ENCODE measurements at regions of chr11 and their contacts with region 1.

Region 1: DNA sequence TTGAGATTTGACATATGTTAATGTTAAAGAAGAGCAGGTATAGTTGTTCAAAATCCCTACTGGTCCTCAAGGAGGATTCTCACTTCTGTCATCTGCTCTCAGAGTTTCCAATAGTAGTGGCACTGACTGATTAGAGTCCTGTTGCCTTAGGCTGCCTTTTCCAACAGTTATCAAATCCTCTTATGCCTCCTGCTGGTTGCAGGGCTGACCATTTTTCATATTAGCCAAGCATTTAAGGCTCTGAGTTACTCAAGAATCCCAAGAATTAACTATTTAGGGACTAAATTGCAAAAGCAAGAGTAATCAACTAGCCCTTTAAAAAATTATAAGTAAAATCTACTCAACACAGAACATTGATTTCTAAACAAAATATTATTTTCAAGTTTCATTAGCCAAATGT is 212.0 kb upstream of the CHORDC1 start:
- DNase-seq: peak; percentile 27
- H3K4me3 Mint-ChIP-seq: no peak overlapping the region
- H3K27ac Mint-ChIP-seq: no peak overlapping the region
- H3K4me1 Mint-ChIP-seq: no peaks in the 10 kb centered on the region
- H3K27me3 Mint-ChIP-seq: no peaks in the 10 kb centered on the region
- CTCF ChIP-seq: no peak

Region 2: DNA sequence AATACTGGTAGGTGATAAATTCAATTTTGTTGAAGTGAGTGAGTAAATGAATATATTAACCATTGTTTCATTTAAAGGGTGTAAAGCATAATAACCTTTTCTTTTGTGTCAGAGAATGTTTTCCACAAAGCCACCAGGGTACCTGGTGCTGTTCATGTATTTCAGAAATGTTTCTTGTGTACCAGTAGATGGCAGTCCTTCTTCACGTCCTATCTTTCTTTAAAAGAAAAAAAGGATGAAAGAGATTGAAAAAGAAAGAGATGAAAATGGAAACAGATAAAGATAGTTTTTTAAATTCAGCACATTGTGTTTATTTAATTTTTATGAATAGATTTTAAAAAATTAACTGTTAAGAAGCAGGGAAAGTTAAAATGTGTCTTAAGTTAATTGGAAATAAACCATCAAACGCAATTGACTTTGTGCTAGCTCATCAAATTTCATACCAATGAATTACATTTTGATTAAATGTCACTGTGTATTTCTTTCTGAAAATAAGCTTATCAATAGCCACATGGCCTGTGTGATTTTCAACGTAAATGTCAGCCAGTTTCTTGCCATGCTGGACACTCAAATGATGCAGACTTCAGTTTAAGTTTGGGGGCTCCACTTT is 146.5 kb before region 1 on chr11:
- CTCF ChIA-PET with region 1: no interaction called
- intact Hi-C with region 1: loop called (anchors 1 kb)
- DNase-seq: no peak
- H3K4me3 Mint-ChIP-seq: no peak overlapping the region
- H3K27ac Mint-ChIP-seq: no peak overlapping the region
- H3K4me1 Mint-ChIP-seq: no peaks in the 10 kb centered on the region
- H3K27me3 Mint-ChIP-seq: no peaks in the 10 kb centered on the region
- CTCF ChIP-seq: peak; percentile 34

Region 3: GRCh38 chr11:90310210-90310609 is 124.6 kb before region 1 on chr11:
- CTCF ChIA-PET with region 1: interaction called, 3 read pairs
- intact Hi-C with region 1: loop called (anchors 10 kb)
- DNase-seq: no peak
- H3K4me3 Mint-ChIP-seq: no peak overlapping the region
- H3K27ac Mint-ChIP-seq: no peak overlapping the region
- H3K4me1 Mint-ChIP-seq: no peaks in the 10 kb centered on the region
- H3K27me3 Mint-ChIP-seq: no peaks in the 10 kb centered on the region
- CTCF ChIP-seq: no peak

Region 4: DNA sequence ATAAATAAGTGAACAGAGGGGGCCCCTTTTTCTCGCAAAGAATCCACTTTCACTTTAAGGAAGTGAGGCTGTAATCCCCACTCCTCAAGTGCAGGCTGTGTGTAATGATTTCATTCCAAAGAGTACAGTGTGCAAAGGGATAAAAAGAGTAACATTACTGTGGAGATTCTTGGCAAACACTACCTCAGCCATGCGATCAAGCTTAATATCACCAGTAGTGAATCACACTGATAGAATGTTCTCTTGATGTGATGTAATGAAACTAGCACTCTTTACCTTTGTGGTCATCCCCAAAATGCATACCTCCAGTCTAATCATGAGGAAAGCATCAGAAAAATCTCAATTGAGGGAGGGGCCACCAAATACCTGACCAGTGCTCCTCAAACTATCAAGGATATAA is 34.1 kb after region 1 on chr11:
- CTCF ChIA-PET with region 1: no interaction called
- intact Hi-C with region 1: no loop called
- DNase-seq: peak; percentile 1
- H3K4me3 Mint-ChIP-seq: no peak overlapping the region
- H3K27ac Mint-ChIP-seq: no peak overlapping the region
- H3K4me1 Mint-ChIP-seq: peaks cover 13% of the 10 kb centered on the region
- H3K27me3 Mint-ChIP-seq: no peaks in the 10 kb centered on the region
- CTCF ChIP-seq: no peak

Region 5: DNA sequence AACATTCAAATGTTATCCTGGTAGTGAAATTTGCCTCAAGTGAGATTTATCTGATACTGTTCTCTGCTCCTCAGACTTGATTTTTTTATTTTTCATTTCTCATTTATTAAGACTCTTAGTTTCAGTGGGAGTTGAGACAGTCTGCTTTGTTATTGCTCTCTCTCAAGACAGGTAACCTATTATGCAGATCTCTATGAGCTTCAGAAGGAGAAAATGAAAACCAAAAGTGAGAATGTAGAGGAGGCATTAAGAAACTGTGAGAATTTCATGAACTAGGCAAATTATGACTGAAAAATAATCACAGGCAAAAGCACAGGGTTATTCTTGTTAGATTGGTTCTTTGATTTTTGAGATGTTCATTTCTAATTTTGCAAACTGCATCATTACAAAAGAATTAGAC is 78.0 kb after region 1 on chr11:
- CTCF ChIA-PET with region 1: no interaction called
- intact Hi-C with region 1: no loop called
- DNase-seq: no peak
- H3K4me3 Mint-ChIP-seq: no peak overlapping the region
- H3K27ac Mint-ChIP-seq: no peak overlapping the region
- H3K4me1 Mint-ChIP-seq: no peaks in the 10 kb centered on the region
- H3K27me3 Mint-ChIP-seq: no peaks in the 10 kb centered on the region
- CTCF ChIP-seq: no peak

Region 6: GRCh38 chr11:90675990-90676389 is 241.1 kb after region 1 on chr11:
- CTCF ChIA-PET with region 1: no interaction called
- intact Hi-C with region 1: no loop called
- DNase-seq: no peak
- H3K4me3 Mint-ChIP-seq: no peak overlapping the region
- H3K27ac Mint-ChIP-seq: no peak overlapping the region
- H3K4me1 Mint-ChIP-seq: no peaks in the 10 kb centered on the region
- H3K27me3 Mint-ChIP-seq: no peaks in the 10 kb centered on the region
- CTCF ChIP-seq: no peak